CD8-positive, alpha-beta T cell (primary cell): ENCODE measurements at regions of chr1 and their contacts with region 1.

Region 1: DNA sequence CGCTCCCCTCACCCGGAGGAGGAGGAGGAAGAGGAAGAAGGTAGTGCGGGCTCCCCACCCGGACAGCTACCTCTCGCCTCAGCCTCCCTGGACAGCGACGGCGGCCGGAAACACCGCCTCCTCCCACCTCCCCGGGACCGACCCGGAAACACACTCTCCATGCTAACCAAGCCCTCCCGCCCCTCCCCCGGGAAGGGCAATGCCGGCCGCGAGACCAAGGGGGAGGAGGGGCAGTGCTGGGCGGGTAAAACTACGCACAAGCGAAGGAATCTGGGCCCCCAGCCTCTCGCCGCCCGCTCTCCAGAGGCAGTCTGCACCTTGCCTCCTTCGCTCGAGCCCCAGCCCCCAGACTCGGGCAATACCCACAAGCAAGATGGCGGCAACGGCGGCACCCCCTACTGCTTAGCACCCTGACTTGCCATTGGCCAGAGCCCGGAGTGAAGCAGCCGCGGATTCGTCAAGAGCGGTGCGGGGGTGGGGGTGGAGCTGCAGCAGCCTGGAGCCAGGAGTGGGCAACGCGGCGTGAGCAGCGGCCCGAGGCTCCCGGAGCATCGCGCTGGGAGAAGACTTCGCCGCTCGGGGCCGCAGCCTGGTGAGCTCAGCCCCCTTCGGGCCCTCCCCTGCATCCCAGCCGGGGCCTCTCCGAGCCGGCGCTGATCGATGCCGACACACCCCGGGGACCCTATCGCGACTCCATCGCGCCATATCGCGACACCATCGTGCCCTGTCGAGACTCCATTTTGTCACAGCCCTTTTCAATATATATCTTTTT is at the starts of genes KIAA0319L and NCDN:
- DNase-seq: peak; percentile 90 to 97 (median 95)
- ATAC-seq: peak; percentile 87
- H3K4me3 ChIP-seq: peak within 1 kb of the TSS; percentile 83 to 99
- H3K4me3 Mint-ChIP-seq: peak within 1 kb of the TSS; percentile 97
- H3K27ac ChIP-seq: peak within 1 kb of the TSS; percentile 63 to 83
- H3K27ac Mint-ChIP-seq: peak within 1 kb of the TSS; percentile 97
- H3K4me1 ChIP-seq: peaks cover 25% of the 10 kb centered on the region
- H3K4me1 Mint-ChIP-seq: peaks cover 61% of the 10 kb centered on the region
- H3K27me3 ChIP-seq: no peaks in the 10 kb centered on the region
- H3K27me3 Mint-ChIP-seq: no peaks in the 10 kb centered on the region
- CTCF ChIP-seq: no peak
- total RNA-seq, gene KIAA0319L: 37.0 to 39.8 TPM
- total RNA-seq, gene NCDN: 9.1 to 10.3 TPM

Region 2: DNA sequence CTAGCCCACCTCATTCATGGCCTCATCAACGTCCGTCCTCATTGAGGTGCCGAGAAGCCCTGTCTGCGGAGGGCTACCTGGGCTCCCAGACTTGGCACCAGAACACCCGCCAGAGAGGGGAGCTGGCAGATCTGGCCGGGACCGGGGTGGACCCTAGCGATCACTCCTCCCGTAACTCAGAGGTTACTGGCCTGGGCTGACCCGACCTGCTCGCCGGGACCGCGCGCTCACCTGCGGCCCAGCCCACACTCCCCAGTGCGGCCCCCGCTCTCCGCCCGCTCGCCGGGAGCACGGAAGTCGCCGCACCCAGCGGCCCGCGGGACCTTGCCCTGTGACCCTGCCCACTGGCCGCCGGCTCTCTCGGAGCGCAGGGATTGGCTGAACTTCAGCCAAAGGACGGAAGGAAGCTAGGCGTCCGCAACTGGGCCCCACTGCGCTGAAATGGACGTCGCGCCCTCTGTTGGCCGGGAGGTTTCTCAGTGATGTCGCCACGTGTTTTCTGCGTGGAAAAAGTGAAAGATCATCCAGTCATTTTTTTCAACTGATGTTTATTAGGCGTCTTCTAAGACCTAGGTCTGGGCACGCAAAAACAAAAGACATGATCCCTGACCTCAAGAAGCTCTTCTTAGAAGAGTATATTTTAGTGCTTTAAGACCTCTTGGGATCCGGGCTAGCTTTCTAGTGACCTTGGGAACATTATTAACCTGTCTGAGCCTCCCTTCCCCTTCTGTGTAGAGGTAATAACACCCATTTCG is 697.9 kb before region 1 on chr1 and contains the start of gene SMIM12:
- CTCF ChIA-PET with region 1: no interaction called
- POLR2A ChIA-PET with region 1: no interaction called
- intact Hi-C with region 1: loop called in 1 of 2 experiments (anchors 10 kb)
- DNase-seq: peak; percentile 76 to 94 (median 92)
- ATAC-seq: peak; percentile 84
- H3K4me3 ChIP-seq: peak within 1 kb of the TSS; percentile 78 to 89
- H3K4me3 Mint-ChIP-seq: peak within 1 kb of the TSS; percentile 90
- H3K27ac ChIP-seq: peak within 1 kb of the TSS; percentile 69 to 89
- H3K27ac Mint-ChIP-seq: peak within 1 kb of the TSS; percentile 96
- H3K4me1 ChIP-seq: peaks cover 46% of the 10 kb centered on the region
- H3K4me1 Mint-ChIP-seq: peaks cover 63% of the 10 kb centered on the region
- H3K27me3 ChIP-seq: no peaks in the 10 kb centered on the region
- H3K27me3 Mint-ChIP-seq: no peaks in the 10 kb centered on the region
- CTCF ChIP-seq: peak; percentile 73
- total RNA-seq, gene SMIM12: 46.6 to 48.7 TPM

Region 3: GRCh38 chr1:35192853-35193664 is 364.4 kb before region 1 on chr1 and contains the start of gene SFPQ:
- CTCF ChIA-PET with region 1: no interaction called
- POLR2A ChIA-PET with region 1: no interaction called
- intact Hi-C with region 1: loop called (anchors 2 to 5 kb)
- DNase-seq: peak; percentile 96 to 99 (median 97)
- ATAC-seq: peak; percentile 87
- H3K4me3 ChIP-seq: peak within 1 kb of the TSS; percentile 59 to 81
- H3K4me3 Mint-ChIP-seq: peak within 1 kb of the TSS; percentile 95
- H3K27ac ChIP-seq: peak within 1 kb of the TSS; percentile 92 to 97
- H3K27ac Mint-ChIP-seq: peak within 1 kb of the TSS; percentile 99
- H3K4me1 ChIP-seq: peaks cover 36% of the 10 kb centered on the region
- H3K4me1 Mint-ChIP-seq: peaks cover 44% of the 10 kb centered on the region
- H3K27me3 ChIP-seq: no peaks in the 10 kb centered on the region
- H3K27me3 Mint-ChIP-seq: no peaks in the 10 kb centered on the region
- CTCF ChIP-seq: no peak
- total RNA-seq, gene SFPQ: 801 to 841 TPM

Region 4: GRCh38 chr1:35505908-35506798 is 51.3 kb before region 1 on chr1:
- CTCF ChIA-PET with region 1: interaction called, 4 read pairs
- POLR2A ChIA-PET with region 1: interaction called, 13 read pairs
- intact Hi-C with region 1: loop called (anchors 2 to 5 kb)
- DNase-seq: peak in 7 of 9 experiments; percentile 21 to 77 (median 61)
- ATAC-seq: peak; percentile 71
- H3K4me3 ChIP-seq: no peak overlapping the region
- H3K4me3 Mint-ChIP-seq: peak overlapping the region; percentile 69
- H3K27ac ChIP-seq: peak overlapping the region; percentile 17 to 58
- H3K27ac Mint-ChIP-seq: peak overlapping the region; percentile 95
- H3K4me1 ChIP-seq: peaks cover 33% of the 10 kb centered on the region
- H3K4me1 Mint-ChIP-seq: peaks cover 71% of the 10 kb centered on the region
- H3K27me3 ChIP-seq: no peaks in the 10 kb centered on the region
- H3K27me3 Mint-ChIP-seq: no peaks in the 10 kb centered on the region
- CTCF ChIP-seq: no peak

Region 5: GRCh38 chr1:35641233-35641866 is 83.9 kb after region 1 on chr1 and contains the start of gene PSMB2:
- CTCF ChIA-PET with region 1: no interaction called
- POLR2A ChIA-PET with region 1: no interaction called
- intact Hi-C with region 1: loop called in 1 of 2 experiments (anchors 2 kb)
- DNase-seq: peak; percentile 91 to 99 (median 97)
- ATAC-seq: peak; percentile 94
- H3K4me3 ChIP-seq: peak within 1 kb of the TSS; percentile 94 to 97
- H3K4me3 Mint-ChIP-seq: peak within 1 kb of the TSS; percentile 100
- H3K27ac ChIP-seq: peak within 1 kb of the TSS; percentile 89 to 93
- H3K27ac Mint-ChIP-seq: peak within 1 kb of the TSS; percentile 97
- H3K4me1 ChIP-seq: peaks cover 33% of the 10 kb centered on the region
- H3K4me1 Mint-ChIP-seq: peaks cover 37% of the 10 kb centered on the region
- H3K27me3 ChIP-seq: peaks cover 0 to 8% of the 10 kb centered on the region in 2 experiments
- H3K27me3 Mint-ChIP-seq: peaks cover 16% of the 10 kb centered on the region
- CTCF ChIP-seq: no peak
- total RNA-seq, gene PSMB2: 36.8 to 38.8 TPM

Region 6: GRCh38 chr1:36088575-36089443 is 531.3 kb after region 1 on chr1 and contains the start of gene ADPRS:
- CTCF ChIA-PET with region 1: no interaction called
- POLR2A ChIA-PET with region 1: no interaction called
- intact Hi-C with region 1: loop called in 1 of 2 experiments (anchors 5 kb)
- DNase-seq: peak; percentile 81 to 96 (median 91)
- ATAC-seq: peak; percentile 89
- H3K4me3 ChIP-seq: peak within 1 kb of the TSS; percentile 89 to 98
- H3K4me3 Mint-ChIP-seq: peak within 1 kb of the TSS; percentile 90
- H3K27ac ChIP-seq: peak within 1 kb of the TSS; percentile 84 to 95
- H3K27ac Mint-ChIP-seq: peak within 1 kb of the TSS; percentile 94
- H3K4me1 ChIP-seq: peaks cover 24% of the 10 kb centered on the region
- H3K4me1 Mint-ChIP-seq: peaks cover 25% of the 10 kb centered on the region
- H3K27me3 ChIP-seq: peaks cover 5 to 6% of the 10 kb centered on the region in 2 experiments
- H3K27me3 Mint-ChIP-seq: peaks cover 15% of the 10 kb centered on the region
- CTCF ChIP-seq: peak; percentile 98
- total RNA-seq, gene ADPRS: 26.2 to 26.7 TPM